ENCODE measurements at regions of chr15 and their contacts with region 1.

Region 1: DNA sequence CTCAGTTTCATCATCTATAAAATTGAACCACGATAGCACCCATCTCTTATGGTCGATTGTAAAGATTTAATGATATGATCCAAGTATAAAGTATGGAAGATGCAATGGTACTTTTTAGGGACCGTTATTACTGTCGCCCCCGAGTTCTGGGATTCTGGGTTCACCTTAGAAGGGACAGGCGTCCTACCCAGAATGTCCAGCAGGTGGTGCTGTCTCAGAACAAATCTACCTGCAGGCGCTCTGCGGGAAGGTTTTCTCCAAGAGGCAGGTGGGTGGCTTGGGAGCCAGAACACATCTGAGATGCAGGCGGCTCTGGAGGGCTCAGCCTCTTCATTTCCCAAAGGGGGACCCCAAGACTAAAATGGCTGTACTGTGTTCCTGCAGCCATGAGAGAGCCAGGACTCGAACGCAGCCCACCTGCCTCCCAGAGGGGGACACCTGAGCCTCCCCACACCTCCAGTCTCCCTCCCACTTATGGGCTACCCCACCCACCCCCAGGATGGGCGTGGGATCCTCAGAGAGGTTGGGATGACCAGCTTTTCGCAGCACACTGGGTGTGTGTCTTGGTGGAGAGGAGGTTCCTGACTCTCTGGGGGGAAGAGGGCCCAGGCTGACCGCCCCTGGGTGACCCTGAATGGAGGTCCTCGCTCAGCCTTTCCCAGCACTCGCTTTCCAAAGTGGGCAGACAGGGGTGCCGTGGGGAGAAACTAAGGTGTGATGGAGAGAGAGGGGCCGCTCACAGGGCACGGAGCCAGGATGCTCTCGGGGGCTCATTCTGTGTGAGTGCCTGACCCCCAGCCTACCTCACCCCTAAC is 28.1 kb upstream of the CORO2B start:
- DNase-seq: peak; percentile 58 to 82 (median 69)
- ATAC-seq: no peak
- H3K4me3 ChIP-seq: no peak overlapping the region
- H3K4me3 Mint-ChIP-seq: no peak overlapping the region
- H3K27ac ChIP-seq: no peak overlapping the region
- H3K27ac Mint-ChIP-seq: no peak overlapping the region
- H3K4me1 ChIP-seq: no peaks in the 10 kb centered on the region
- H3K4me1 Mint-ChIP-seq: no peaks in the 10 kb centered on the region
- H3K27me3 ChIP-seq: peaks cover 11 to 15% of the 10 kb centered on the region in 2 experiments
- H3K27me3 Mint-ChIP-seq: peaks cover 54% of the 10 kb centered on the region
- CTCF ChIP-seq: peak; percentile 94

Region 2: DNA sequence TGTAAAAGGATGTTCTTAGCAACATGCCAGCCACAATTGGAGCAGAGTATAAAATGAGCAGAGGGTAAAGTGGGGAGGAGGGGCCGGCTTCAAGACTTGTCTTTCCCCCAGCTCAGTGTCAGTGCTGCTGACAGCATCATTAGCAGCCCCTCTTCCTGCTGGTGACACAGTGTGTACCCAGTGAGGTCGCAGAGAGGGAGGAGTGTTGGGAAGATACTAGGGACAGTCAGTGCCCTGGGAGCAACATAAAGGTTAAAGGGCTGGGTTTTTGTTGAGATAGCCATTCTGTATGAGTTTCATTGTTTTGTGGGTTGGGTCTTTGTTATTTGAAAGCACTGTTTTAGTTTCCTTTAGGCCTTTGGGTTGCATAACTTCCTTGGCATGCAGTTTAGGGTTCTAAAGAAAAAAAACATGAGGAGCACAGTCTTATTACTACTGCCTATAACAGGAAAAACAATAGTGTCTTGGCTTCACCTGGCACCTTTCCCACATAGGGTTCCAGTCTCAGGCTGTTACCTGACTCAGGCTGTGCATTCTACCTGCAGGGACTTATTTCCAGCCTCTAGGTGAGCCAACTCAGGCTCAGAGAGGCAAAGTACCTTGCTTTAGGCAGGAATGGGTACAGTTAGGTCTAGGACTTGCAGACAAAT is 819.5 kb before region 1 on chr15:
- CTCF ChIA-PET with region 1: no interaction called
- POLR2A ChIA-PET with region 1: no interaction called
- intact Hi-C with region 1: no loop called
- DNase-seq: no peak
- ATAC-seq: no peak
- H3K4me3 ChIP-seq: no peak overlapping the region
- H3K4me3 Mint-ChIP-seq: no peak overlapping the region
- H3K27ac ChIP-seq: no peak overlapping the region
- H3K27ac Mint-ChIP-seq: no peak overlapping the region
- H3K4me1 ChIP-seq: peaks cover 4% of the 10 kb centered on the region
- H3K4me1 Mint-ChIP-seq: peaks cover 24% of the 10 kb centered on the region
- H3K27me3 ChIP-seq: no peaks in the 10 kb centered on the region
- H3K27me3 Mint-ChIP-seq: no peaks in the 10 kb centered on the region
- CTCF ChIP-seq: no peak

Region 3: GRCh38 chr15:68252925-68253534 is 297.7 kb before region 1 on chr15:
- CTCF ChIA-PET with region 1: no interaction called
- POLR2A ChIA-PET with region 1: no interaction called
- intact Hi-C with region 1: loop called in 1 of 2 experiments (anchors 5 kb)
- DNase-seq: peak in 6 of 14 experiments; percentile 16 to 76 (median 60)
- ATAC-seq: peak; percentile 75
- H3K4me3 ChIP-seq: no peak overlapping the region
- H3K4me3 Mint-ChIP-seq: peak overlapping the region; percentile 44
- H3K27ac ChIP-seq: no peak overlapping the region
- H3K27ac Mint-ChIP-seq: no peak overlapping the region
- H3K4me1 ChIP-seq: peaks cover 9% of the 10 kb centered on the region
- H3K4me1 Mint-ChIP-seq: peaks cover 7% of the 10 kb centered on the region
- H3K27me3 ChIP-seq: no peaks in the 10 kb centered on the region
- H3K27me3 Mint-ChIP-seq: no peaks in the 10 kb centered on the region
- CTCF ChIP-seq: peak; percentile 89

Region 4: DNA sequence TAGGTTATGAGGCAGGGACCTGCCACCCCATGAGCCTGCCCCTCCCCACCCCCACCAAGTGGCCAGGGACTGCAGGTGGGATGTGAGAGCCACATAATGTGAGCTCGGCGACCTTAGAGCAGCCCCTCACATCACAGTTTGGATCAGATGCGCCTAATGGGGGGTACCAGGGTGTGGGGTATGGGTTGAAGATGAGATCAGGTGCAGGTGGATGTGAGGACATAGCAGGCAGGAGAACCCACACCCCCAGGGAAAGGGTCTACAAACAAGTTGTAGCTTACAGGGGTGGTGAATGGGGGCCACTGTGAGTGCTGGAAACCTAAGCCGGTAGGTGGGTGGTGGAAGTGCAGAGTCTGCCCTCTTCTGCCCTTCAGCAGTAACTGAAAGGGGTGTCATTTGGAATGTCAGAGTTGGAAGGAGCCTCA is 122.1 kb after region 1 on chr15:
- CTCF ChIA-PET with region 1: interaction called, 3 read pairs
- POLR2A ChIA-PET with region 1: no interaction called
- intact Hi-C with region 1: loop called (anchors 2 to 5 kb)
- DNase-seq: no peak
- ATAC-seq: no peak
- H3K4me3 ChIP-seq: no peak overlapping the region
- H3K4me3 Mint-ChIP-seq: no peak overlapping the region
- H3K27ac ChIP-seq: no peak overlapping the region
- H3K27ac Mint-ChIP-seq: no peak overlapping the region
- H3K4me1 ChIP-seq: peaks cover 2% of the 10 kb centered on the region
- H3K4me1 Mint-ChIP-seq: no peaks in the 10 kb centered on the region
- H3K27me3 ChIP-seq: peaks cover 0 to 13% of the 10 kb centered on the region in 2 experiments
- H3K27me3 Mint-ChIP-seq: peaks cover 16% of the 10 kb centered on the region
- CTCF ChIP-seq: no peak

Region 5: DNA sequence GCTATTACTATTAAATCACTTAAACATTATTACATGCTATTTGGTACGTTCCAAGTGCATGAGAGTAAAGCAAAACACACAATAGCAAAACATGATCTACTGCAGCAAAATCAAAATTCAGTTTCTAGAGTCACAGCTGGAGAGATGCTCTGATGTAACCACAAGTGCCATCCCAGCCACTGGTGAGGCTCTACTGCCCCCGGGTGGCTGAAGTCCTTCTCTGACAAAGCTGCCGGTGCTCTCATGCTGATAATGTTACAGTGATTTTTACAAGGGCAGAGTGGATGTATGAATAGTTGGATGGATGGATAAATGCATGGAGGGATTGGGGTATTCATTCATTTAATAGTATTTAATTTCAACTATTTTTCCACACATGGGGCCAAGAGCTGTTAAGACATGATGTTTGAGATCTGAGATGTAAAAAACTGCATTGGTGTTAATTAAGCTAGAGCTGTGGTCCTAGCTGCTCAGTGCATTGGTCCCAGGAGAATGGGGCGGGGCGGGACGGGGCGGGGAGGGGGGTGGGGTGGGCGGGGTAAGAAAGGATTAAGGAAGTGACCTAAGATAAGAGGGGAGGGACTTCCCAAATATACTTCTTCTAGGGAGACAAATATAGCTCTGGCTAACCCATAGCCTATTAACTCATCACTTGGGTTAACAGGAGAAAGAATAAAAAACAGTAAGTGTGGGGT is 374.3 kb after region 1 on chr15:
- CTCF ChIA-PET with region 1: interaction called, 9 read pairs
- POLR2A ChIA-PET with region 1: no interaction called
- intact Hi-C with region 1: loop called (anchors 2 kb)
- DNase-seq: peak; percentile 26 to 70 (median 50)
- ATAC-seq: peak; percentile 70
- H3K4me3 ChIP-seq: no peak overlapping the region
- H3K4me3 Mint-ChIP-seq: no peak overlapping the region
- H3K27ac ChIP-seq: no peak overlapping the region
- H3K27ac Mint-ChIP-seq: no peak overlapping the region
- H3K4me1 ChIP-seq: no peaks in the 10 kb centered on the region
- H3K4me1 Mint-ChIP-seq: no peaks in the 10 kb centered on the region
- H3K27me3 ChIP-seq: peaks cover 3 to 9% of the 10 kb centered on the region in 2 experiments
- H3K27me3 Mint-ChIP-seq: peaks cover 33% of the 10 kb centered on the region
- CTCF ChIP-seq: peak; percentile 63

Measured in CD4-positive, alpha-beta T cell (primary cell).